ENCODE measurements at regions of chr19 and their contacts with region 1.

Region 1: GRCh38 chr19:46189971-46190888 is 39.3 kb upstream of the IGFL1 start:
- DNase-seq: no peak
- H3K4me3 Mint-ChIP-seq: no peak overlapping the region
- H3K27ac Mint-ChIP-seq: no peak overlapping the region
- H3K4me1 Mint-ChIP-seq: peaks cover 6% of the 10 kb centered on the region
- H3K27me3 Mint-ChIP-seq: peaks cover 40% of the 10 kb centered on the region

Region 2: GRCh38 chr19:46030812-46031550 is 159.2 kb before region 1 on chr19:
- intact Hi-C with region 1: loop called (anchors 1 kb)
- DNase-seq: no peak
- H3K4me3 Mint-ChIP-seq: no peak overlapping the region
- H3K27ac Mint-ChIP-seq: no peak overlapping the region
- H3K4me1 Mint-ChIP-seq: peaks cover 10% of the 10 kb centered on the region
- H3K27me3 Mint-ChIP-seq: peaks cover 25% of the 10 kb centered on the region

Region 3: DNA sequence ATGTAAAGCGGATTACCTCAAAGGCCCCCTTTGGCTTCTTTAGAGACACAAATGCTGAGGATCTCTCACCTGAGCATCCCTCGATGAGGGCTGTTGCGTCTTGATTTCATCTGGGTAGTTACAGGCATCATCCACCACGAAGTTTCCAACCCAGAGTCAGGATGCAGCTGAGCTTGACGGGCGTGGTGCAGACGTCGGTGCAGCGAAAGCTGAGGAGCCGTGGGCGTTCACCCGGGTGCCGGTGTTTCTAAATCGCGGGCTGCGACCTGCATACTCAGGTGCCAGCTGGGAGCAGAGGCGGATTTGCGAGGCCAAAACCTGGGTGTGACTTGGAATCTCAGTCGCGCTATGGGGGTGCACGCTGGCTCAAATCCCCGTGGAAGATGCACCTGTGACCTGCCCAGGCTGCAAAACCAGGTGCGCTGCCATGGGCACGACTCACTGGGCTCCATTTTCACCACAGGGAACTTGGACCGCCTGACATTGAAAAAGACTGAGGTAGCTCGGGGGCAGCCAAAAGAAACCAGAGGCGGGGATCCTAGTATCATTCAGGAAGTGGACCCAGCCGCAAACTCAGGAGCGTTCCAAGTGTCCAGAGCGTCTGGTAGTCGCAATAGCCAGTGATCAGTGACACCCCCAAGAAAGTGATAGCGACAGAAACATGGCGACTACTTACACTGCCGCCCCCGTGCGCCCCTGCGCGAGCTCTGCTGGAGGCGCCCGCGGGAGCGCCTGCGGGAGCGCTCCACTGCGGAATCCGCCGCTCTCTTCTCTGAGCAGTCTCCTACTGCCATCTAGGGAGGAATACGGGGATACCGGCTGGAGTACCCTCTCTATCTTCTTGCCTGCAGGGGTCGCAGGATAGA is 113.0 kb before region 1 on chr19:
- intact Hi-C with region 1: loop called (anchors 1 kb)
- DNase-seq: peak; percentile 69
- H3K4me3 Mint-ChIP-seq: no peak overlapping the region
- H3K27ac Mint-ChIP-seq: no peak overlapping the region
- H3K4me1 Mint-ChIP-seq: peaks cover 2% of the 10 kb centered on the region
- H3K27me3 Mint-ChIP-seq: peaks cover 70% of the 10 kb centered on the region

Region 4: GRCh38 chr19:46115396-46116106 is 74.7 kb before region 1 on chr19:
- intact Hi-C with region 1: loop called (anchors 2 kb)
- DNase-seq: peak; percentile 73
- H3K4me3 Mint-ChIP-seq: peak overlapping the region; percentile 53
- H3K27ac Mint-ChIP-seq: peak overlapping the region; percentile 46
- H3K4me1 Mint-ChIP-seq: peaks cover 14% of the 10 kb centered on the region
- H3K27me3 Mint-ChIP-seq: peaks cover 35% of the 10 kb centered on the region

Region 5: DNA sequence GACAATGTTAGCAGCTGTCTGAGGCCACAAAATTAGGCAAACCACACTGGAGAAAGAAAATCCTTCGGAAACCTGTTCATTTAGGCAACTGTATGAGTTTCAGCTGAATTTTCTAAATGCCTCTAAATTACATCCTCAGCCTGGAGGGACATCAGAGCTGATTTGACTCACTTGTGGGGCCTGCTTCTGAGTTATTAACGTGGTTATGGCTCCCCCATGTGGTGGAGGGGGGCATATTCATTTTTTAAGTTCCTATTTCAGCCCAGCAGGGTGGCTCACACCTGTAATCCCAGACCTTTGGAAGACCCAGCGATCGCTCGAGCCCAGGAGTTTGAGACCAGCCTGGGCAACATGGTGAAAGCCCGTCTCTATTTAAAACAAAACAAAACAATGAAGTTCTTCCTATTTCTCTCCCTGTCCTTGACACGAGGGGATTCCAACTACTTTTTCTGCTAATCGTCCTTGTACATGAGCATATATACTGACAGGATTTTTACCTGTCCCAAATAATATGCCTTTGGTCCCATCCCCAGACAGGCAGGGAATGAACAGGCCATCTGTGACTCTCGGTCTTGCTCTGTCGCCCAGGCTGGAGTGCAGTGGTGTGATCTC is 75.1 kb after region 1 on chr19:
- intact Hi-C with region 1: loop called (anchors 2 kb)
- DNase-seq: peak; percentile 91
- H3K4me3 Mint-ChIP-seq: no peak overlapping the region
- H3K27ac Mint-ChIP-seq: no peak overlapping the region
- H3K4me1 Mint-ChIP-seq: peaks cover 10% of the 10 kb centered on the region
- H3K27me3 Mint-ChIP-seq: peaks cover 57% of the 10 kb centered on the region